ENCODE measurements at regions of chr1 and their contacts with region 1.

Region 1: GRCh38 chr1:200334661-200335256 is 75.1 kb downstream of the ZNF281 start:
- DNase-seq: no peak
- ATAC-seq: peak in 1 of 4 experiments; percentile 29
- H3K4me3 ChIP-seq: no peak overlapping the region
- H3K4me3 Mint-ChIP-seq: no peak overlapping the region
- H3K27ac ChIP-seq: no peak overlapping the region
- H3K27ac Mint-ChIP-seq: no peak overlapping the region
- H3K4me1 ChIP-seq: peaks cover 9 to 20% of the 10 kb centered on the region in 2 experiments
- H3K4me1 Mint-ChIP-seq: peaks cover 25 to 29% (median 28%) of the 10 kb centered on the region in 3 donors
- H3K27me3 ChIP-seq: no peaks in the 10 kb centered on the region
- H3K27me3 Mint-ChIP-seq: no peaks in the 10 kb centered on the region

Region 2: GRCh38 chr1:200317236-200317635 is 17.5 kb before region 1 on chr1:
- CTCF ChIA-PET with region 1: no interaction called
- POLR2A ChIA-PET with region 1: interaction called in 1 of 2 experiments, 11 read pairs
- DNase-seq: no peak
- ATAC-seq: no peak
- H3K4me3 ChIP-seq: no peak overlapping the region
- H3K4me3 Mint-ChIP-seq: no peak overlapping the region
- H3K27ac ChIP-seq: no peak overlapping the region
- H3K27ac Mint-ChIP-seq: no peak overlapping the region
- H3K4me1 ChIP-seq: no peaks in the 10 kb centered on the region
- H3K4me1 Mint-ChIP-seq: no peaks in the 10 kb centered on the region
- H3K27me3 ChIP-seq: no peaks in the 10 kb centered on the region
- H3K27me3 Mint-ChIP-seq: peaks cover 7 to 11% of the 10 kb centered on the region in 2 donors

Region 3: GRCh38 chr1:200473698-200474371 is 139.1 kb after region 1 on chr1:
- CTCF ChIA-PET with region 1: no interaction called
- POLR2A ChIA-PET with region 1: interaction called in 1 of 2 experiments, 15 read pairs
- DNase-seq: peak in 1 of 35 experiments; percentile 16
- ATAC-seq: peak in 3 of 4 experiments; percentile 36 to 44 (median 41)
- H3K4me3 ChIP-seq: peak overlapping the region in 1 of 2 donors; percentile 11
- H3K4me3 Mint-ChIP-seq: peak overlapping the region; percentile 35 to 58 (median 51)
- H3K27ac ChIP-seq: no peak overlapping the region
- H3K27ac Mint-ChIP-seq: peak overlapping the region in 1 of 2 donors; percentile 16
- H3K4me1 ChIP-seq: peaks cover 0 to 10% of the 10 kb centered on the region in 2 experiments
- H3K4me1 Mint-ChIP-seq: peaks cover 6 to 20% (median 16%) of the 10 kb centered on the region in 3 donors
- H3K27me3 ChIP-seq: peaks cover 0 to 5% of the 10 kb centered on the region in 2 experiments
- H3K27me3 Mint-ChIP-seq: peaks cover 3 to 10% of the 10 kb centered on the region in 2 donors